IMR-90 (cell line): ENCODE measurements at regions of chr14 and their contacts with region 1.

Region 1: DNA sequence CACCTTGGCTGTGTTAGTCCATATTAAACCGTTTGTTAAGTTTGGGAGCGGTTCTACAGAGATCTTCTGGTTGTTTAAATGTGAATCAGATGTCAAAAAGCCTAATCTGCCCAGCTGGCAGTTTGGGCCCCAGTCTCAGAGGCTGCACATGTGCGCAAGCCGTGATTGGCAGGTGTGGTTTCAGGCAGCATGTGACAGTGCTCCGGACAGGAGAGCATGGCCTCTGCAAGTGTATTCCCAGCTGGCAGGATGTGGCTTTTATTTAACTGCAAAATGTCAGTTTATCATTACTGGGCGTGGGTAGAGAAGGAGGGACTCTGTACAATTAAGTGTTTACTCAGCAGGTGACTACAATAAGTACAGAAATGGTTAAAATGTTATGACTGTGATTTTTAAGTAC is 77.5 kb downstream of the PELI2 start:
- DNase-seq: peak; percentile 58
- ATAC-seq: no peak
- H3K4me3 ChIP-seq: no peak overlapping the region
- H3K27ac ChIP-seq: no peak overlapping the region
- H3K4me1 ChIP-seq: peaks cover 18% of the 10 kb centered on the region
- H3K27me3 ChIP-seq: no peaks in the 10 kb centered on the region
- CTCF ChIP-seq: no peak
- POLR2A ChIP-seq: no peak
- RAD21 ChIP-seq: no peak

Region 2: DNA sequence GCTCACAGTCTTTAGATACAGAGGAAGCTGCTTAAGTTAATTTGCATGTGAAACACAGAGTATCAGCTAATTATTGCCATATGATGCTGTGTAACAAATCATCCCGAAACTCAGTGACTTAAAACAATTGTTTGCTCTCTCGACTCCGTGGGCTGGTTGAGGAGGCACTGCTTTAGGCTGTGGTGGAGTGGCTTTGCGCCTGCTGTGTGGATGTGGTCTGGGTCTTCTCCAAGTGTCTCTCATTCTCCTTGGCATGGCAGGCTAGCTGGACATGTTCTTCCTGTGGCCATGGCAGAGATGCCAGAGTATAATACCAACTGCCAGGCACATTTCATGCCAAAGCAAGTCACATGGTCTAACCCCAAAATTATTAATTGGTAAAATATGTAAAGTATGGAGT is 36.6 kb before region 1 on chr14:
- CTCF ChIA-PET with region 1: no interaction called
- POLR2A ChIA-PET with region 1: no interaction called
- dilution Hi-C with region 1: no loop called
- in situ Hi-C with region 1: no loop called
- intact Hi-C with region 1: no loop called
- DNase-seq: no peak
- ATAC-seq: no peak
- H3K4me3 ChIP-seq: no peak overlapping the region
- H3K27ac ChIP-seq: no peak overlapping the region
- H3K4me1 ChIP-seq: peaks cover 5% of the 10 kb centered on the region
- H3K27me3 ChIP-seq: no peaks in the 10 kb centered on the region
- CTCF ChIP-seq: no peak
- POLR2A ChIP-seq: no peak
- RAD21 ChIP-seq: no peak

Region 3: DNA sequence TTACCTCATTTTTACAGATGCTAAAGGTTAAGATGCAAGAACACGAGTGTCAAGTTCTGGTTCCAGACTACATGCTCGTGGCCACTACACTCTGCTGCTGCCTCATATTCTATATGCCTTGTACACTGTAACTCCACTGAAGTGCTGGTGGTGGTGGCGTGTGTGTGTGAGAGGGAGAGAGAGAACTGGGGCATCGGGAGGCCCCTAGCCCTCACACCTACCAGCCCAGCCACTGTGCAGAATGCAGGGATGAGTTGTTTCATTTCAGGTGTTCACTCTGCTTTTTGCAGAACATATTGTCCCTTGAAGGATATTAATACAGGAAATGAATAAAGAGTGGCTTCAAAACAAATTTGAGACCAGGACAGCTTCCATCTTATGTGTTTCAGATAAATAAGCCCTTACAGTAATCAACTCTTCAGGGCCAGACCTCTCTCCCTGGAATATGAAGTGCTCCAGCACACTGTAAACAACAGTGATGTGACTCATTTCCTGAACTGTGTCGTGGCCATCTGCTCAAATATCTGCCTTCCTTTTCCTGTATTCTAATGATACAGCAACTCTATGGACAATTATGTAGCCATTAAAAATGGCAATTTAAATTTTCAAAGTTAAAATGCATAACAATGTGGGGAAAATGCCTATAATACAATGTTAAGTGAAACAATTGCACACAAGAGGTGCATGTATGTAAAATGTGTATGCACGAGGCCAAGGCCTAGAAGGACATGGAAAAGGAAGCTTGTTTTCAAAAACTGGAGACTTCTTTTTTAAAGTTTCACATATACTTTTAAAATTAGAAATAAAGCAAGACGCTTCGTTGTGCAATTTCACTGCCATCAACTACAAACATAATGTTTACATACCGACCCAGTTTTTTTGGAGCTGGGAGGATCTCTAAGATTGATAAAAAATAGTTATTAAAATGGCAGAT is 137.9 kb after region 1 on chr14:
- CTCF ChIA-PET with region 1: no interaction called
- POLR2A ChIA-PET with region 1: no interaction called
- dilution Hi-C with region 1: no loop called
- in situ Hi-C with region 1: no loop called
- intact Hi-C with region 1: loop called (anchors 1 kb)
- DNase-seq: peak; percentile 93
- ATAC-seq: peak; percentile 95
- H3K4me3 ChIP-seq: no peak overlapping the region
- H3K27ac ChIP-seq: peak overlapping the region; percentile 96
- H3K4me1 ChIP-seq: peaks cover 12% of the 10 kb centered on the region
- H3K27me3 ChIP-seq: no peaks in the 10 kb centered on the region
- CTCF ChIP-seq: no peak
- POLR2A ChIP-seq: no peak
- RAD21 ChIP-seq: no peak